ENCODE measurements at regions of chr18 and their contacts with region 1.

Region 1: DNA sequence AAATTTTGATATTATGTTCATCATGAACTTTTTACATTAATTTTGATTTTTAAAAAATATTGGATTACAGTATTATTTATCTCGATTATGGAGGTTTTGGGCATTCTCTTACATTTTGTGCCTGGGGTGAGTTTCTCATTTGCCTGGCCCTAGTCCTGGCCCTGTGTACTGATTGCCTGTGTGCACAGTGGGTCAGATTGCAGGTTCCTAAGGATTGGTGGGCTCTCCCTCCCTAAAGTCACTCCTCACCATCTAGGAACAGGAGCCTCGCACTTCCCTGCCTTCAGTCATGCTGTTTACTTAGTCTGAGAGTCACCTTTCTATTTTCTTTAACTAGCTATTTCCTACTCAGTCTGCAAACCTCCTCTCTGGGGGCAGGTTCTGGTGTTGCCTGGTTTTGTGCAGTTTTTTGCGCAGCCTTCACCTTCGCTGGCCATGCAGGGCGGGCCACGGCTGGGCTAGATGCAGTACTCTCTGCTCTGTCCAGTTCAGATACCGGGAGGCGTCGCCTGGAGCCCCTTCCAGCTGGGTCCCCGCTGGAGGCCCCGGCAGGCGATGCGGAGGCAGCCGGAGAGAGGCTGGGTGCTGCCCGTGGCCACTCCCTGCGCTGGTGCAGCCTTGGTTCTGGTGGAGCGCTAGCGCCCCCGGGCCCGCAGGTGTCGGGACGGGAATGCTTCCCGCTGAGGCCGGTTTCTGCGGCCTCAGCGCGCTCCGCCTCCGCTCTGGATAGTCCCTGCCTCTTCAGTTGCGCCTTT is 23.3 kb upstream of the MC5R start:
- DNase-seq: peak; percentile 77
- H3K4me3 Mint-ChIP-seq: peak overlapping the region; percentile 69
- H3K27ac Mint-ChIP-seq: no peak overlapping the region
- H3K4me1 Mint-ChIP-seq: peaks cover 6% of the 10 kb centered on the region
- H3K27me3 Mint-ChIP-seq: peaks cover 40% of the 10 kb centered on the region

Region 2: DNA sequence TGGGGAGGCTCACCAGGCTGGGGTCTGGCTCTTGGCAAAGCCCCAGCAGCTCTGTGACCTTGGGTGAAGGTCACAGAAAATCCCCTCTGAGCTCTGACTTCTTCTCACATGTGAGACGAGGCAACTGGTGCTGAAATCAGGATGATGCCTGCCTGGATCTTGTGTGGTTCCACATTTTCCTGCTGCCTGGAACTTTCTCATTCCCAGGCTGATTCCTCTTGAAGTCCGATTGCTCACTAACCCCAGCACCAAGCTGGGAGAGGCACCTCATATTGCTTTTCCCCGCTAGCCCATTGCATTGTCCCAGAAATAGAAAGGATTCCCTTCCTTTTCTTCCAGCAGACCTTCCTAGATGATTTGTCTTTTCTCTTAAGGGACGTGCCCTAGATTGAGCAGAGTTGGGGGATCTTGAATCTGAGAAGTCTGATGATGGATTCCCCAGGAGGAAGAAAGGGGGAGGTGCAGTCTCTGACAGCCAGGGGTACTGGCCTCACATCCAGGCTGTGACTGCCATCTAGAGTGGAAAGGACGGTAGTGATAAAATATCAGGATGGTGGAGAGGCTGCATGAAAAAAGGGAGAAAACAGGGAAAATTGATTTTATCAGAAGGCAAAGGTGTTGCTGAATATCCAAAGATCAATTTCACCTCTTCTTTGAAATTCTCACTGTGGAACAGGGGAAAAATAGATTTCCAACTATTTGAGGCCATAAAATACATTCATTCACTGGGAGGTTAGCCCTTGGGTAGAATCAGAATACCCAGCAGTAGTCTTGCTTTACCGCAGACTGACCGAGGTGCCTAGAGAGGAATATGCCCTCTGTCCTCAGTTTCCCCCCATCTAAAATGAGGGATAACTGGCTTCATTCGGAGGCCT is 170.6 kb before region 1 on chr18:
- CTCF ChIA-PET with region 1: interaction called, 4 read pairs
- intact Hi-C with region 1: loop called (anchors 2 kb)
- DNase-seq: peak; percentile 68
- H3K4me3 Mint-ChIP-seq: no peak overlapping the region
- H3K27ac Mint-ChIP-seq: no peak overlapping the region
- H3K4me1 Mint-ChIP-seq: no peaks in the 10 kb centered on the region
- H3K27me3 Mint-ChIP-seq: no peaks in the 10 kb centered on the region

Region 3: GRCh38 chr18:13660510-13660909 is 140.2 kb before region 1 on chr18:
- CTCF ChIA-PET with region 1: no interaction called
- intact Hi-C with region 1: loop called (anchors 10 kb)
- DNase-seq: no peak
- H3K4me3 Mint-ChIP-seq: no peak overlapping the region
- H3K27ac Mint-ChIP-seq: no peak overlapping the region
- H3K4me1 Mint-ChIP-seq: no peaks in the 10 kb centered on the region
- H3K27me3 Mint-ChIP-seq: no peaks in the 10 kb centered on the region

Region 4: DNA sequence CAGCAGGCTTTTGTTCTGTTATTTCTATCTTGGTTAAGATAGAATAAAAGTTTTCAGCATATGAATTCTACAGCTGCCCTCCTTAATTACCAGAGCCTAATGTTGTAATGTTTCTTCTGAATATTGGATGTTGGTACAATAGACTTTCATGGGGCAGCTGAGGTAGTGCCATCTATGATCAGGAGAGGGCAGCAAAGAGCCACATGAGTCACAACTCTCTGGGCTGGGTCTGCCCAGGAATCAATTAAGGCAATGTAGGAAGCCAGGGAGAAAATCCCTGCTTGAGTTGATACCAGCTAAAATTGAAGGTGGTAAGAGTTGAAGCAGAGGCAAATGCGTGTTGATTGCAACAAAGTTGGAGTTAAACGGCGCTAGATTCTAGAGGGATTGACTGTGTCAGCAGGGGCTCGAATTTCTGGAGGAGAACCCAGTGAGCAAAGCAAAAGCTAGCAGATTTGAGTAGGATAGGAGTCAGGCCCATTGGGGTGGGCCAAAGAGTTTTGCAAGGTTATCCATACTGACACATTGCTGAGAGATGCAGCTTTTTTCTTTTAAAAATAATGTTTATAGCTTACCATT is 12.7 kb after region 1 on chr18:
- CTCF ChIA-PET with region 1: interaction called, 40 read pairs
- intact Hi-C with region 1: no loop called
- DNase-seq: peak; percentile 75
- H3K4me3 Mint-ChIP-seq: no peak overlapping the region
- H3K27ac Mint-ChIP-seq: no peak overlapping the region
- H3K4me1 Mint-ChIP-seq: no peaks in the 10 kb centered on the region
- H3K27me3 Mint-ChIP-seq: no peaks in the 10 kb centered on the region

Region 5: GRCh38 chr18:14144628-14144895 is 343.9 kb after region 1 on chr18:
- CTCF ChIA-PET with region 1: no interaction called
- intact Hi-C with region 1: no loop called
- DNase-seq: no peak
- H3K4me3 Mint-ChIP-seq: no peak overlapping the region
- H3K27ac Mint-ChIP-seq: no peak overlapping the region
- H3K4me1 Mint-ChIP-seq: no peaks in the 10 kb centered on the region
- H3K27me3 Mint-ChIP-seq: no peaks in the 10 kb centered on the region

Measured in activated naive CD4-positive, alpha-beta T cell treated with anti-CD3 and anti-CD28 coated beads for 36 hours (primary cell).